Ovary (tissue), 10 donors: ENCODE measurements at regions of chr2 and their contacts with region 1.

Region 1: DNA sequence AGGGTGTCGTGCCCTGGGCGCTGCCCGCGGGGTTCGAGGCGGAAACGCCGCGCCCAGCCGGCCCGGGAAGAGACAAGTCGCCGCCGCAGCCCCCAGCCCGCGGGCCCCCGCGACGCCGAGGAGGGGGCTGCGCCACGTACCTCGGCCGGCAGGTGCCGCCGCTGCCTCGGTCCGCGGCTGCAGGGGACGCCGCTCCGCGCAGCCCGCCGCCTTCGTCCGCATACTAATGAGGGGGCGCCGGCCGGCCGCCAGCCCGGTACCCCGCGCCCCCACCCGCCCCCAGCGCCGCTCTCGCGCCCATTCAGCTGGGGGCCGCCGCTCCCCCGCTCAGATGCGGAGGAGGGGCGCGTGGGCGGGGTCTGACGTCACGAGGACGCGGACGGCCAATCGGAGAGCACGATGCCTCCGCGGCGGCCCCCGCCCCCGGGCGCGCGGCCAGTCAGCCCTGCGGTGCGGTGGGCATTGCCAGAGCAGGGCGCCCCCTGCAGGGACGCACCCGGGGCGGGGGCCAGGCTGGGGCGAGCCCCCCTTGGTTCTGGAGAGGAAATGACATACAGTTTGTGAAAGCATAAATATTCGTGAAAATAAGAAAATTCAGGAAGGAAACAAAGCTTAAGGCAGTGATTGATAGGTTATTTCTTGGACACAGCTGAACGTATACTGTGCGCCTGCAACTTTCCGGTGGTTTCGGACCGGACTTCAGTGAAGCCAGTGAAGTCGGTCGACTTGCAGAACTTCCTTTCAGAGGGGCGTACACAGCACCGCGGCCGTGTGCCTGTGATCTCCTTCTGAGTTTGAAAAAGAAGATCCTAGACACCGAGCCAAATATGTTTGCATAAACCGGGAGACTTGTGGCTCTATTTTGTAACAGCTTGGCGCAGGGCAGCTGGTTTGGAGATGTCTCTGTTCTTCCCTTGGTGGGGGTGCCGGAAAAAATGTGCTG is at the start of gene ST3GAL5:
- DNase-seq: peak; percentile 92 to 97 (median 95)
- H3K4me3 ChIP-seq: peak within 1 kb of the TSS; percentile 86
- H3K27ac ChIP-seq: peak within 1 kb of the TSS; percentile 84 to 88
- H3K4me1 ChIP-seq: peaks cover 8% of the 10 kb centered on the region
- H3K27me3 ChIP-seq: no peaks in the 10 kb centered on the region
- CTCF ChIP-seq: peak in 2 of 3 donors; percentile 54 to 63
- EP300 ChIP-seq: no peak
- POLR2A ChIP-seq: no peak
- total RNA-seq, gene ST3GAL5: 12.8 to 52.7 (median 22.2) TPM

Region 2: GRCh38 chr2:85327822-85328617 is 560.9 kb before region 1 on chr2 and contains the start of gene TGOLN2:
- intact Hi-C with region 1: loop called in 1 of 4 experiments (anchors 5 kb)
- DNase-seq: peak; percentile 91 to 95 (median 95)
- H3K4me3 ChIP-seq: peak within 1 kb of the TSS; percentile 83
- H3K27ac ChIP-seq: peak within 1 kb of the TSS; percentile 92 to 94
- H3K4me1 ChIP-seq: peaks cover 13% of the 10 kb centered on the region
- H3K27me3 ChIP-seq: no peaks in the 10 kb centered on the region
- CTCF ChIP-seq: peak in 1 of 3 donors; percentile 17
- EP300 ChIP-seq: no peak
- POLR2A ChIP-seq: peak; percentile 99
- total RNA-seq, gene TGOLN2: 58.5 to 86.5 (median 75.8) TPM

Region 3: DNA sequence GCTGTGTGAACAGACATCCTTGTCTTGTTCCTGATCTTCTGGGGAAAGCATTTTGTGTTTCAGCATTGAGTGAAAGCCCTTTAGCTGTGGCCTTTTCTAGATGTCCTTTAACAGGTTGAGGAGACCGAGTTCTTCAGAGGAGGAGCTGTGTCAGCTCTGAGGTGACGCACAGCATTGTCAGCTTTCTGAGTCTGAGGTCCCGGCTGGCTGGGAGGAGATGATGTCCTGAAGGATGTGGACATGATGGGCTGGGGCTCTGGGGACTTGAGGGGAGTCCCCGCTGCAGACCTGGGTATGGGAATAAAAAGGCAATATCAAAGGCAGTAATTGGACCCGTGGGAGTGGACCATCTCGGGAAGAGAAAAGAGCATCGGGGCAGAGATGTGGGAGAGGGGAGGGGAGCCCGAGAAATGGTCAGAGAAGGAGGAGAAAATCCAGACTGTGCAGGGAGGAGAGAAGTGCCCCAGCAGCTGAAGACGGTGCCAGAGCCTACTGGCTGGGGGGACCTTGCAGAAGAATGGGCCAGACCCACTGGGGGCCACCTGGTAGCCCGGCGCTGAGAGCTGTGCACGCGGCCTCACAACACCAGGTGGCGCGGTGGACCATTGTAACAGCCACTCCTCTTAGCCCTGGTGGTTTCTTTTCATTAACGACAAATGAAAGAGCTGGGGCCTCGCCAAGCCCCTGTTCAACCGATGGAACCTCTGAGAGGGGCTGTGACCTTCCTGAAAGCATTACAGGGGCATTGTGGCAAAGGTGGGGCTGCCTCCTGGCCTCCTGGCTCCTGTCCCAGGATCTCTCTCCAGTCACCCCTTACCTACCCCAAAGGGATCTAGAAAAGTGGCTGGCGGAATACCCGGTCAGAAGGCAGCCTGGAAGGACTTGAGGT is 61.7 kb before region 1 on chr2:
- intact Hi-C with region 1: loop called in 3 of 4 experiments (anchors 5 to 10 kb)
- DNase-seq: peak; percentile 72 to 89 (median 83)
- H3K4me3 ChIP-seq: peak overlapping the region; percentile 21
- H3K27ac ChIP-seq: no peak overlapping the region
- H3K4me1 ChIP-seq: peaks cover 3% of the 10 kb centered on the region
- H3K27me3 ChIP-seq: no peaks in the 10 kb centered on the region
- CTCF ChIP-seq: peak; percentile 82 to 96 (median 95)
- EP300 ChIP-seq: no peak
- POLR2A ChIP-seq: peak; percentile 23

Region 4: GRCh38 chr2:85999061-85999831 is 110.3 kb after region 1 on chr2:
- intact Hi-C with region 1: loop called in 2 of 4 experiments (anchors 5 kb)
- DNase-seq: no peak
- H3K4me3 ChIP-seq: no peak overlapping the region
- H3K27ac ChIP-seq: peak overlapping the region; percentile 73 to 88
- H3K4me1 ChIP-seq: peaks cover 29% of the 10 kb centered on the region
- H3K27me3 ChIP-seq: no peaks in the 10 kb centered on the region
- CTCF ChIP-seq: no peak
- EP300 ChIP-seq: no peak
- POLR2A ChIP-seq: no peak

Region 5: GRCh38 chr2:86035883-86036668 is 147.1 kb after region 1 on chr2:
- intact Hi-C with region 1: loop called in 1 of 4 experiments (anchors 2 kb)
- DNase-seq: peak; percentile 76 to 84 (median 82)
- H3K4me3 ChIP-seq: no peak overlapping the region
- H3K27ac ChIP-seq: peak overlapping the region; percentile 70 to 85
- H3K4me1 ChIP-seq: peaks cover 21% of the 10 kb centered on the region
- H3K27me3 ChIP-seq: no peaks in the 10 kb centered on the region
- CTCF ChIP-seq: peak in 2 of 3 donors; percentile 40 to 52
- EP300 ChIP-seq: no peak
- POLR2A ChIP-seq: no peak

Region 6: GRCh38 chr2:86072271-86072858 is 183.4 kb after region 1 on chr2:
- intact Hi-C with region 1: loop called in 3 of 4 experiments (anchors 5 to 10 kb)
- DNase-seq: peak in 2 of 5 donors; percentile 38 to 49
- H3K4me3 ChIP-seq: no peak overlapping the region
- H3K27ac ChIP-seq: no peak overlapping the region
- H3K4me1 ChIP-seq: peaks cover 2% of the 10 kb centered on the region
- H3K27me3 ChIP-seq: no peaks in the 10 kb centered on the region
- CTCF ChIP-seq: no peak
- EP300 ChIP-seq: no peak
- POLR2A ChIP-seq: no peak

Region 7: GRCh38 chr2:86079981-86080911 is 191.3 kb after region 1 on chr2:
- intact Hi-C with region 1: loop called in 1 of 4 experiments (anchors 10 kb)
- DNase-seq: peak; percentile 79 to 88 (median 85)
- H3K4me3 ChIP-seq: no peak overlapping the region
- H3K27ac ChIP-seq: no peak overlapping the region
- H3K4me1 ChIP-seq: no peaks in the 10 kb centered on the region
- H3K27me3 ChIP-seq: no peaks in the 10 kb centered on the region
- CTCF ChIP-seq: peak; percentile 49 to 72 (median 71)
- EP300 ChIP-seq: no peak
- POLR2A ChIP-seq: no peak